HAP-1 (cell line): ENCODE measurements at regions of chr15 and their contacts with region 1.

Region 1: GRCh38 chr15:20361091-20361490 is 180.5 kb downstream of the GOLGA6L6 start:
- DNase-seq: no peak
- H3K4me3 ChIP-seq: no peak overlapping the region
- H3K4me1 ChIP-seq: no peaks in the 10 kb centered on the region
- H3K27me3 ChIP-seq: no peaks in the 10 kb centered on the region

Region 2: DNA sequence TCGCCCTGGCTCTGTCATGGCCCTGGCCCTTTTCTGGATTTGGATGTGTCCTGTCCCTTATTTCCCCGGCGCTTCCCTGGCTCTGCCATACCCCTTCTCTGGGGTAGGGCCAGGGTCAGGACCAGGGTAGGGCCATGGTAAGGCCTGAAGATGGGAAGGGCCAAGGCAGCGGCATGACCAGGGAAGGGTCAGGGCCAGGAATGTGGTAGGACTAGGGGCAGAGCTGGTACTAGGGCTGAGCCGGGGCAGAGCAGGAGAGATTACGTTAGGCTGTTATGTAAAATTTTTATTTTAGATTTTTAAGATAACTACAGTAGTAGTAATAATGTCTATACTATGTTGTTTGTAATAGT is 56.1 kb before region 1 on chr15:
- in situ Hi-C with region 1: loop called (anchors 10 kb)
- DNase-seq: no peak
- H3K4me3 ChIP-seq: no peak overlapping the region
- H3K4me1 ChIP-seq: no peaks in the 10 kb centered on the region
- H3K27me3 ChIP-seq: no peaks in the 10 kb centered on the region